ENCODE measurements at regions of chr11 and their contacts with region 1.

Region 1: GRCh38 chr11:8717876-8718753 is 35.5 kb downstream of the RPL27A start:
- DNase-seq: peak; percentile 39 to 57
- ATAC-seq: peak; percentile 35 to 85 (median 70)
- H3K4me3 ChIP-seq: no peak overlapping the region
- H3K27ac ChIP-seq: peak overlapping the region; percentile 44 to 90 (median 82)
- H3K4me1 ChIP-seq: peaks cover 42 to 99% (median 94%) of the 10 kb centered on the region in 9 donors
- H3K27me3 ChIP-seq: no peaks in the 10 kb centered on the region
- CTCF ChIP-seq: no peak

Region 2: GRCh38 chr11:8759634-8760033 is 41.5 kb after region 1 on chr11:
- intact Hi-C with region 1: loop called in 1 of 10 experiments (anchors 5 kb)
- DNase-seq: peak in 1 of 2 donors; percentile 27
- ATAC-seq: peak; percentile 10 to 59 (median 38)
- H3K4me3 ChIP-seq: no peak overlapping the region
- H3K27ac ChIP-seq: peak overlapping the region in 8 of 10 donors; percentile 33 to 77 (median 46)
- H3K4me1 ChIP-seq: peaks cover 22 to 96% (median 73%) of the 10 kb centered on the region in 9 donors
- H3K27me3 ChIP-seq: no peaks in the 10 kb centered on the region
- CTCF ChIP-seq: no peak

Region 3: DNA sequence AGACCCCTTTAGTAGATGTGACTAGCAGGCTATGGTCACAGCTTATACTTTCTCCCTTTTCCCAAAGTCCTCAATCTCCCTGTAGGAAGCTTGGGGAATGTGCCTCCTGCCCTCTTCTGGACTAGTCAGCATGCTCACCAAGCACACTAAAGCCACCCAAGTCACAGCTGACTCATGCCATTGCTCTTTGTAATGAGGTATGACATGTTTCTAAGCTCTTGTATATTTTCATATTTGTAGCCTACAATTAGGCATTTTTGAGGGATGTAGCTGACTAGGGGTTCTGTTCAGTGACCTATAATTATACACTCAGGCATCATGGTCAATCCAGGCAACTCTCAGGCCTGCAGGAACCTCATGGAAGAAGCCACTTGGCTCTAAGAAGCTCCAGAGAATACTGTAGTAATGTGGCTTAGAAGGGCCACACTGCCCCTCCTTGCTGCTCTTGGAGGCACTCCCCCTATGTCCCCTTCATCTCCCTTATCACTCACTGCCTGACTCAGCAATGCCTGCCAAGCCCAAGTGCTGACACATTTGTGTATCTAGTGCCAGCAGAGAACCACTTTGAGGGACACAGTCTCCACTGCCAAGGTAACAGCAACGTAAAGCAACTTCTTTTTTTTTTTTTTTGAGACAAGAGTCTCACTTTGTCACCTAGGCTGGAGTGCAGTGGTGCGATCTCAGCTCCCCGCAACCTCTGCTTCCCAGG is 50.7 kb after region 1 on chr11:
- intact Hi-C with region 1: loop called in 3 of 10 experiments (anchors 5 kb)
- DNase-seq: peak; percentile 53 to 74
- ATAC-seq: peak; percentile 70 to 94 (median 86)
- H3K4me3 ChIP-seq: no peak overlapping the region
- H3K27ac ChIP-seq: peak overlapping the region; percentile 31 to 83 (median 70)
- H3K4me1 ChIP-seq: peaks cover 22 to 96% (median 58%) of the 10 kb centered on the region in 9 donors
- H3K27me3 ChIP-seq: no peaks in the 10 kb centered on the region
- CTCF ChIP-seq: peak in 5 of 9 donors; percentile 2 to 51 (median 34)

Region 4: GRCh38 chr11:8800520-8801110 is 82.5 kb after region 1 on chr11:
- intact Hi-C with region 1: loop called in 2 of 10 experiments (anchors 5 kb)
- DNase-seq: no peak
- ATAC-seq: peak in 3 of 8 donors; percentile 26 to 60 (median 32)
- H3K4me3 ChIP-seq: no peak overlapping the region
- H3K27ac ChIP-seq: peak overlapping the region in 6 of 10 donors; percentile 1 to 55 (median 31)
- H3K4me1 ChIP-seq: peaks cover 10 to 72% (median 50%) of the 10 kb centered on the region in 9 donors
- H3K27me3 ChIP-seq: no peaks in the 10 kb centered on the region
- CTCF ChIP-seq: no peak

Region 5: DNA sequence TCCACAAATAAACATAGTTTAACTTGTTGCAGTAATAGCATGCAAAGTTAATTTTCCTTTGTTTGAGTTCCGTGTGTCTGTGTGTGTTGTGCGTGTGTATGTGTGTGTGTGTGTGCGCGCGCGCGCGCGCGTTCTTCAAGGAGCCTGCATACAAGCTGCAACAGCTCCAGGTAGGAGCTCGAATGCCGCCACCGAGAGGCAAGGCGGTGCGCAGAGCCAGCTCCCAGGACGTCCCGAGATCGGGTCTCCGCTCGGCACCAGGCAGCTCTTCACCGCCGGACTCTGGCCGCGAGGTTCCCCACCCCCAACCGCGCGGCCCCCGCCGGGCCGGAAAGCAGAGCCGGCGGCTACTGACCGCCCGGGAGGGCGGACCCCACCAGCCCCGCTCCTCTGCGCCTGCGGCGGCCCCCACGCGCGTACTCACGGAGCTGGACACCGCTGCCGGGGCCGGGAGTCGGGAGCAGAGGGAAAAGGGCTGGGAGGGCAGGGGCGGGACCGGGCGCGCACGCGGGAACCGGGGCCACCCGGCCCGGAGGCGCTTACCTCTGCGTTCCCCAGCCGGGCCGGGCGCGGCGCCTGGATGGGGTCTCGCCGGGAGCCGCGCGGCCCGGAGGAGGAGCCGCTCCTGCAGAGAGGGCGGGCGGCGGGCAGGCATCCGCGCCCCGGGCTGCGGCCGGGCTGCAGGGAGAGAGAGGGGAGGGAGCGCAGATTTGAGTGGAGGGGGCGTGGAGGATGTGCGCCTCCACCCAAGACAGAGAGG is 152.5 kb after region 1 on chr11:
- intact Hi-C with region 1: no loop called
- DNase-seq: peak; percentile 59
- ATAC-seq: peak; percentile 80 to 90 (median 82)
- H3K4me3 ChIP-seq: peak overlapping the region; percentile 59 to 96 (median 86)
- H3K27ac ChIP-seq: peak overlapping the region; percentile 63 to 93 (median 86)
- H3K4me1 ChIP-seq: peaks cover 0 to 73% (median 32%) of the 10 kb centered on the region in 9 donors
- H3K27me3 ChIP-seq: peaks cover 0 to 38% (median 0%) of the 10 kb centered on the region in 7 donors
- CTCF ChIP-seq: no peak

Region 6: GRCh38 chr11:9003573-9004309 is 285.6 kb after region 1 on chr11 and contains the start of gene NRIP3:
- intact Hi-C with region 1: no loop called
- DNase-seq: peak; percentile 59 to 76
- ATAC-seq: peak; percentile 84 to 92 (median 86)
- H3K4me3 ChIP-seq: peak within 1 kb of the TSS; percentile 32 to 56 (median 54)
- H3K27ac ChIP-seq: no peak within 1 kb of the TSS
- H3K4me1 ChIP-seq: peaks cover 7 to 27% (median 20%) of the 10 kb centered on the region in 9 donors
- H3K27me3 ChIP-seq: peaks cover 0 to 53% (median 31%) of the 10 kb centered on the region in 7 donors
- CTCF ChIP-seq: no peak
- total RNA-seq, gene NRIP3: 0.32 to 1.9 (median 1.1) TPM